Right ventricle myocardium inferior (tissue), 1 donor: ENCODE measurements at regions of chr6 and their contacts with region 1.

Region 1: GRCh38 chr6:13395272-13396237 is 67.2 kb upstream of the TBC1D7 start:
- DNase-seq: peak; percentile 88
- ATAC-seq: peak; percentile 65

Region 2: DNA sequence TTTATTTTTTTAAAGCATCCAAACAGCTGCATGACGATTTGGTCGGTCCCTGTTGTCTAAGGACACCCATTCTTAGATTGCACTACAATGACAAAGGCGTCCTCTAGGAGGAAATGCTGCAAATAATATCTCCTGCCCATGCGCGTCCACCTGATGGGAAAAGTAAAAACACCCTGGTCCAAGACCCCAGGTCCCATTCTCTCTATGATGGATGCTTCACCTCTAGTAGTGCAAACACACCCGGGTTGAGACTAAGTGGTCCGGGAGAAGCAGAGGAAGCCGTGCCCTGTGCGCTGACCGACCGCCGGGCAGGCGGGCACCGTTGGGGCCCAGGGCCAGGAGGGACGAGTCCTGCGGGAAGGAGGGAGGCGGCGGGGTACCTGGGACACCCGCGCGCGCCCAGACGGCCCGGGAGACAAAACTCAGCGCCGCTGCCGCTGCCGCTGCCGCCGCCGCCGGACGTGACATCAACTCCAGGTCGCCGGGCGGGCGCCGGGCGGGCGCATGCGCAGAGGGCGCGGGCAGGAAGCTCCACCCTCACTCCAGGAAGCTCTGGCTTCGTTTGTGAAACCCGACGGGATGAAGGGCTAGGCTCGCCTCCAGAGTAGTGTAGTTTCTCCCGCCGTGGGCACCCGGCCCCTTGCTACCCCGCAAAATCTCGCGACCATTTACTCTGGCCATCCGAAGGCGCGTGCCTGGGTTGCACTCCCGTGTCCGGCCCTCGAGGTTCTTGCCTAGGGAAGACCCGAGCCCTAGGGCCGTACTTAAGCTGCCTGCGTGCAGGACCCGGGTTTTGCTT is 67.3 kb before region 1 on chr6 and contains the start of gene TBC1D7:
- intact Hi-C with region 1: loop called (anchors 5 kb)
- DNase-seq: peak; percentile 94
- ATAC-seq: peak; percentile 96
- total RNA-seq, gene TBC1D7: 32.2 TPM